ENCODE measurements at regions of chr17 and their contacts with region 1.

Region 1: GRCh38 chr17:43428524-43428923 is 29.7 kb downstream of the ARL4D start:
- DNase-seq: no peak
- H3K4me3 ChIP-seq: no peak overlapping the region
- H3K4me3 Mint-ChIP-seq: no peak overlapping the region
- H3K27ac ChIP-seq: no peak overlapping the region
- H3K27ac Mint-ChIP-seq: no peak overlapping the region
- H3K4me1 ChIP-seq: no peaks in the 10 kb centered on the region
- H3K4me1 Mint-ChIP-seq: no peaks in the 10 kb centered on the region
- H3K27me3 ChIP-seq: no peaks in the 10 kb centered on the region
- H3K27me3 Mint-ChIP-seq: peaks cover 7 to 16% of the 10 kb centered on the region in 2 donors

Region 2: GRCh38 chr17:43224146-43224695 is 204.3 kb before region 1 on chr17:
- CTCF ChIA-PET with region 1: no interaction called
- POLR2A ChIA-PET with region 1: no interaction called
- intact Hi-C with region 1: no loop called
- DNase-seq: no peak
- H3K4me3 ChIP-seq: no peak overlapping the region
- H3K4me3 Mint-ChIP-seq: no peak overlapping the region
- H3K27ac ChIP-seq: no peak overlapping the region
- H3K27ac Mint-ChIP-seq: peak overlapping the region in 1 of 7 donors; percentile 45
- H3K4me1 ChIP-seq: no peaks in the 10 kb centered on the region
- H3K4me1 Mint-ChIP-seq: peaks cover 0 to 4% (median 1%) of the 10 kb centered on the region in 4 donors
- H3K27me3 ChIP-seq: no peaks in the 10 kb centered on the region
- H3K27me3 Mint-ChIP-seq: no peaks in the 10 kb centered on the region

Region 3: DNA sequence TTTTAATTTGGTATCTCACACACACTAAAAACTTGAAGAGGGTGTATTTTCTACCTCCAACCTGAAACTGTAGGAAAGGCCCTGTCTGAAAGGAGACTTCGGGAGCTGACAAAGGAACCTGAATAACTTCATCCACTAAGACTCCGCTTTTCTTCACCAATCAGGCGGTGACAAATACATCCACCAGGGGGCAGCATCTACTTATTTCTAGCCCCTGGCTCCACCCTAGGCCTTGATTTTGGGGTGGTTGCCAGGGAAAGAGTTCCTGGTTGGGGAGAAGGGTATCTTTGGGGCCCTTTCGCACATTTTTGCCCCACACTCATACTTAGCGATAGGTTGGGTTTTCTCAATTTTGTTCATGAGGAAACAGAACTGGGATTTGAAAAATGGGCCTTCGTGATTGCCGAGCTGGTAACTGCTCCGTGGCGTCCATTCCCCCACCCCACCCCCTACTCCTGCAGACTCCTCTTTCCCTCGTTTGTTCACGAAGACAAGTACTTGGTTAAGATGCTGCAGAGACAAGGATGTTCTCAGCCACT is 34.5 kb before region 1 on chr17:
- CTCF ChIA-PET with region 1: interaction called, 5 read pairs
- POLR2A ChIA-PET with region 1: no interaction called
- intact Hi-C with region 1: loop called (anchors 1 kb)
- DNase-seq: peak; percentile 82 to 89 (median 86)
- H3K4me3 ChIP-seq: peak overlapping the region in 1 of 2 donors; percentile 30
- H3K4me3 Mint-ChIP-seq: peak overlapping the region in 4 of 8 donors; percentile 8 to 46 (median 30)
- H3K27ac ChIP-seq: no peak overlapping the region
- H3K27ac Mint-ChIP-seq: peak overlapping the region; percentile 27 to 73 (median 62)
- H3K4me1 ChIP-seq: peaks cover 41% of the 10 kb centered on the region
- H3K4me1 Mint-ChIP-seq: peaks cover 19 to 56% (median 35%) of the 10 kb centered on the region in 4 donors
- H3K27me3 ChIP-seq: no peaks in the 10 kb centered on the region
- H3K27me3 Mint-ChIP-seq: no peaks in the 10 kb centered on the region

Region 4: GRCh38 chr17:43406676-43407645 is 21.6 kb before region 1 on chr17:
- CTCF ChIA-PET with region 1: no interaction called
- POLR2A ChIA-PET with region 1: no interaction called
- intact Hi-C with region 1: no loop called
- DNase-seq: no peak
- H3K4me3 ChIP-seq: no peak overlapping the region
- H3K4me3 Mint-ChIP-seq: no peak overlapping the region
- H3K27ac ChIP-seq: no peak overlapping the region
- H3K27ac Mint-ChIP-seq: peak overlapping the region in 1 of 7 donors; percentile 18
- H3K4me1 ChIP-seq: no peaks in the 10 kb centered on the region
- H3K4me1 Mint-ChIP-seq: peaks cover 0 to 4% (median 0%) of the 10 kb centered on the region in 4 donors
- H3K27me3 ChIP-seq: no peaks in the 10 kb centered on the region
- H3K27me3 Mint-ChIP-seq: peaks cover 5 to 6% of the 10 kb centered on the region in 2 donors

Region 5: DNA sequence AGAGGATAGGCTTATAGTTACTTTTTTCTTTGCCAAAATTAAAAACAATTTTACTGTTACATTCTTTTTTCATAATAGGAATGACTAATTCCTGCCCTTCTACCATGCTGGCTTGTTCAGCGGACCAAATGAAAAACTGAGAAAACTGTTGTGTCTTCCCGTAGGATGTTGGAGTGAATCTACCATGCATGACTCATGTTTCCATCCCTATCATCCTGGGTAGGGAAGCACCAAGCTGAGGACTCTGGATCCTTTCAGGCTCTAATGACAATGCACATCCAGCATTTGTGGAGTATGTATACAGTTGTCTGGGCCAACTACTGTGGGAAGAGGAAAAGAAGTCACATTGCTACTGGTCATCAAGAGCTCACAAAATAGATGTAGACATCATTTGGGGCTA is 14.2 kb after region 1 on chr17:
- CTCF ChIA-PET with region 1: no interaction called
- POLR2A ChIA-PET with region 1: no interaction called
- intact Hi-C with region 1: no loop called
- DNase-seq: no peak
- H3K4me3 ChIP-seq: no peak overlapping the region
- H3K4me3 Mint-ChIP-seq: no peak overlapping the region
- H3K27ac ChIP-seq: no peak overlapping the region
- H3K27ac Mint-ChIP-seq: no peak overlapping the region
- H3K4me1 ChIP-seq: no peaks in the 10 kb centered on the region
- H3K4me1 Mint-ChIP-seq: no peaks in the 10 kb centered on the region
- H3K27me3 ChIP-seq: no peaks in the 10 kb centered on the region
- H3K27me3 Mint-ChIP-seq: peaks cover 6 to 10% of the 10 kb centered on the region in 2 donors

Region 6: GRCh38 chr17:43570518-43570928 is 142.0 kb after region 1 on chr17:
- CTCF ChIA-PET with region 1: no interaction called
- POLR2A ChIA-PET with region 1: no interaction called
- intact Hi-C with region 1: no loop called
- DNase-seq: no peak
- H3K4me3 ChIP-seq: no peak overlapping the region
- H3K4me3 Mint-ChIP-seq: no peak overlapping the region
- H3K27ac ChIP-seq: no peak overlapping the region
- H3K27ac Mint-ChIP-seq: peak overlapping the region in 1 of 7 donors; percentile 35
- H3K4me1 ChIP-seq: no peaks in the 10 kb centered on the region
- H3K4me1 Mint-ChIP-seq: no peaks in the 10 kb centered on the region
- H3K27me3 ChIP-seq: no peaks in the 10 kb centered on the region
- H3K27me3 Mint-ChIP-seq: no peaks in the 10 kb centered on the region